Gastrocnemius medialis (tissue), 4 donors: ENCODE measurements at regions of chr1 and their contacts with region 1.

Region 1: GRCh38 chr1:154809436-154810413 is 60.4 kb downstream of the KCNN3 start:
- DNase-seq: peak; percentile 23 to 63
- ATAC-seq: peak; percentile 63 to 64
- H3K4me3 ChIP-seq: peak overlapping the region in 1 of 4 donors; percentile 23
- H3K27ac ChIP-seq: peak overlapping the region; percentile 81 to 92 (median 85)
- H3K4me1 ChIP-seq: peaks cover 45 to 51% of the 10 kb centered on the region in 2 donors
- H3K27me3 ChIP-seq: no peaks in the 10 kb centered on the region
- CTCF ChIP-seq: no peak
- POLR2A ChIP-seq: no peak

Region 2: DNA sequence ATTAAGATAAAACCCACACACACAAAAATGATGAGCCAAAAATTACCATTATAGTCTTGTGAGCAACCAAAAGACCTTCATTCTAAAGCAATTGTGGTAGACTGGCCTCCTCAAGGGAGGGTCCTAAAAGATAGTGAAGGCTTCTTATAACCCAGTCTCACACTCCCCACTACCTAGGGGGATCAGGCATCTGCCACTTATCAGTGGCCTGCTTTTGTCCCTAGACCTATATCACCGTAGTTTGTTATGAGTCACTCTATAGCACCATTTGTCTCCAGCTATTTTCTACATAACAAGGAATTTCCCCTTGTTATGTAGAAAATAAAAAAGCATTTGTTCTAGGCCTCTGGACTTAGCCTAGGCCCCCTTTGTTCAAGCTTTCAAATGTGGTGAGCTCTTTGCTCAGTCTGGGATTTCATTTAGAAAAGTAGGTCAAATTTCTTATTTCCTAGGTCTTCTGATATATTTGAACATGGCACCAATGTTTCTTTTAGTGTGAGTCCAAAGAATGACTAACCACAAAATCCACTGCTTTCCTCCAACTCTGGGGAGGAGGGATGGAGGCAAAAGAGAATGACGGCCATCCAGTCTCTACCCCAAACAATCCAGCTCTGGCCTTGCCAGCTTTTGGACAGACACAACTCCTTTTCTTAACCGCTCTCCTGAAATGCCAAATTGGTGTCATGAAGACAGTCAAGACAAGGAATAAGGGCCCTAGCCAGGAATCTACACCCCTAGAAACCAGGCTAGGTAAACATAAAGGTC is 210.7 kb before region 1 on chr1:
- in situ Hi-C with region 1: no loop called
- intact Hi-C with region 1: no loop called
- DNase-seq: no peak
- ATAC-seq: no peak
- H3K4me3 ChIP-seq: no peak overlapping the region
- H3K27ac ChIP-seq: no peak overlapping the region
- H3K4me1 ChIP-seq: peaks cover 11 to 22% of the 10 kb centered on the region in 2 donors
- H3K27me3 ChIP-seq: no peaks in the 10 kb centered on the region
- CTCF ChIP-seq: no peak
- POLR2A ChIP-seq: no peak

Region 3: DNA sequence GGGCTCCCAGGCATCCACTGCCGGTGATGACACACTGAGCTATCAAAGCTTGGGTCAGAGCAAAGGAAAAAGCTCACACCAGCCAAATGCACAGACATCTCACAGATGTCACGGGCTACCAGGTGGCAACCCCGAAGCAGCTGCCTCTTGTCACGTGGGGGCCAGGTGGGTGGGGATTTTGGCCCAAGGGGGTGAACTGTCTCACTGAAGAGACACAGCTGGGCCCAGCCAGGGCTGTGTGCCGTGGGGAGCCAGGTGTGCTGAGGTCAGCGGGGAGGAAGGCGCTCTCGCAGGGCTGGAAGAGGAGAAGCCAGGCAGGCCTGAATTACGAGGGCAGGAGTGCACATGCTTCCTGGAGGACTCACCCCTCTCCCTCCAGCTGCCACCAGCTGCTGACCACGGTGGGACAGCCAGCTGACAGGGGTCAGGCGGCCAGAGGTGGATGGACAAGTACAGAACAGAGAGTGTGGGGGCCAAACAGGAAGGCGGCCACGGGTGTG is 28.0 kb after region 1 on chr1:
- in situ Hi-C with region 1: no loop called
- intact Hi-C with region 1: loop called (anchors 1 kb)
- DNase-seq: peak; percentile 40 to 79
- ATAC-seq: peak; percentile 36 to 69
- H3K4me3 ChIP-seq: no peak overlapping the region
- H3K27ac ChIP-seq: peak overlapping the region; percentile 42 to 68 (median 64)
- H3K4me1 ChIP-seq: peaks cover 49 to 56% of the 10 kb centered on the region in 2 donors
- H3K27me3 ChIP-seq: no peaks in the 10 kb centered on the region
- CTCF ChIP-seq: no peak
- POLR2A ChIP-seq: no peak